ENCODE measurements at regions of chr6 and their contacts with region 1.

Region 1: DNA sequence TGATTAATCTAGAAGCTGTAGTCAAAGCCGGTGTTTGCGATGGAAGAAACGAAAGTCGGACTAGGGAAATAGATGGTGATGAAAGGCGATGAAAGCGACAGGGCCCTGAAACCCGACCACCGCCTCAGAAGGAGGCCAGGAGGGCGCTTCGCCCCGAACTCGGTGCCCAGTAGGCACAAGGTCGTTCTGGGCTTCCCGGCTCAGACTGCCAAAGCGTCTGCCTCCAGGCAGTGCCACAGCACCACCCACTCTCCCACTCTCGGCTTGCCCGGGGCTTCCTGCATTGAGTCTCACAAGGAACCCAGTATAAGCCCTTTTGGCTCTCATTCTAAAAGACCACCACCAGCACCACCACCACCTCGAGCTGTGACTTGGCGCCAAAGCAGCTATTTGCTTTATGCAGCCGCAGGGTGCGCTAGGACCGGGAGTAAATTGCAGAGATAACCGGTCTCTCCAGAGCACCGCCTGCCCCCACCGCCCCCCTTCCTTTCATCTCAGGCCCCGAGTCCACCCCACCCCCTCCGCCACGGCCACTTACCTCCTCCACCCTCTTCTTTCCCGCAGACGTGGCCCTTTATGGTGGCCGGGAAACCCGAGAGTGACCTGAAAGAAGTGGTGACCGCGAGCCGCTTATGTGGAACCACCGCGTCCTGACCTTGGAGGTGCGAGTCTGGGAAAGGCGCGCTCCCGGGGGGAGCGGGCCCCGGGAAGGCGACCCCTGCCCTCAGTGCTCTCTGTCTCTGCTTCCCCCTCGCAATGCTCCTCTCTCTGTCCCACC is 2.4 kb downstream of the TCF21 start:
- DNase-seq: peak; percentile 12
- H3K4me3 Mint-ChIP-seq: peak overlapping the region; percentile 68
- H3K27ac Mint-ChIP-seq: no peak overlapping the region
- H3K4me1 Mint-ChIP-seq: peaks cover 43% of the 10 kb centered on the region
- H3K27me3 Mint-ChIP-seq: peaks cover 87% of the 10 kb centered on the region

Region 2: GRCh38 chr6:133241086-133241900 is 650.0 kb before region 1 on chr6 and contains the start of gene EYA4:
- CTCF ChIA-PET with region 1: no interaction called
- intact Hi-C with region 1: loop called (anchors 5 kb)
- DNase-seq: no peak
- H3K4me3 Mint-ChIP-seq: peak within 1 kb of the TSS; percentile 36
- H3K27ac Mint-ChIP-seq: no peak within 1 kb of the TSS
- H3K4me1 Mint-ChIP-seq: peaks cover 20% of the 10 kb centered on the region
- H3K27me3 Mint-ChIP-seq: peaks cover 41% of the 10 kb centered on the region
- total RNA-seq, gene EYA4: not detected

Region 3: DNA sequence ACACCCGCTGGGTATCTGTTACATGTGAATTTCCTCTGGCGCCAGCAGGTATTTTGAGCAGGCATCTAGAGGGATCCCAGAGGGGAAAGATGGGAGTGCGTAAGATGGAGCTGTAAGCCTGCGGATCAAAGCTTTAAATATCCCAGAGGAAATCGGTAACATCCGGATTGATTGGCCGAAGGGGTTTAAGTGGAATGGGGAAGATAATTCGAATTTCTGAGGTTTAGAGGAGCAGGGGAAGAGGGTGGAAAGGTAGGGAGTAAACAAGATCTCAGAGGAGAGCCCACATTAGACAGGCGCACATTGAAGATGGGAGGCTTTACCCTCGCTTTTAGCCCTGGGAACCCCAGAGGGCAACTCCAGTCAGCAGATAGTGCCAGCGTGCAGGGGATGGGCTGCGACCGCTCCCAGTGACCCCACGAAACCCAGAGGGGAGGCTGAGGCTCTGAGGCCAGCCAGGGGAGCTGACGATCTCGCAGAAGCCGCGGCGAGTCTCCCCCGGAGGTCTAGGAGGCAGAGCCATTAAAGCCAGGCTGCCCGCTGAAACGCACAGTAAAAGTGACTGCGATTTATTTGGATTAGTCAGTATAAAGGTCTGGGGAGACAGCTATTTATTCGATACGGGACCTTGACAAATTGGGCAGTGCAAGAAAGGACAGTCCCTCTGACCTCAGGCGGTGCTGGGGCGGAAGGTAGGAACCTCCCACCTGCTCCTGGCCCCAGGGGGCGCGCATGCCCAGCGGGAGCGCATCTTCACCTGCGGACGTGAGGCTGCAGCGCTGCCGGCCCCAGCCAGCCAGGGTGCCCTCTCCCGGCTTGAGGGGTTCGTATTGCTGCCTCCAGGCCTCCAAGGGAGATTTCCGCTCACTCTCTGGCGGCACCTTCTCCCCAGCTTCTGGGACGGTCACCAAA is 36.7 kb before region 1 on chr6:
- CTCF ChIA-PET with region 1: no interaction called
- intact Hi-C with region 1: loop called (anchors 2 kb)
- DNase-seq: no peak
- H3K4me3 Mint-ChIP-seq: no peak overlapping the region
- H3K27ac Mint-ChIP-seq: no peak overlapping the region
- H3K4me1 Mint-ChIP-seq: peaks cover 10% of the 10 kb centered on the region
- H3K27me3 Mint-ChIP-seq: peaks cover 52% of the 10 kb centered on the region

Region 4: DNA sequence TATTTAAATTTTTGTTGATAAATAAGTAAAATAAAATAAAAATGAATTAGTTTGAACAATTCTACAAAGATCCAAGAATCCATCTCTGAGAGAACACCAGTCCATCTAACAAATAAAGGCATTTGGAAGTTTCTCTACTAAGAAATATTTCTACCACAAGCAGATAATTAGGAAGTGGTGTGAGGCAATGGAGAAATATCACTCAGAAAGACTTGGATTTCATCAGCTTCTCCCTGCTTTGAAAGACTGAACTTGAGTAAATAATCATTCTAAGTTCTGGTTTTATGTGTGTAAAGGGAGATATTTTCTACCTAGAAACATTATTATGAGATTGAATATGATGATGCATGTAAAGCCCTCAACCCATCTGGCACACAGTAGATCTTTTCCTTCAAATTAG is 20.2 kb before region 1 on chr6:
- CTCF ChIA-PET with region 1: no interaction called
- intact Hi-C with region 1: no loop called
- DNase-seq: no peak
- H3K4me3 Mint-ChIP-seq: no peak overlapping the region
- H3K27ac Mint-ChIP-seq: no peak overlapping the region
- H3K4me1 Mint-ChIP-seq: no peaks in the 10 kb centered on the region
- H3K27me3 Mint-ChIP-seq: peaks cover 14% of the 10 kb centered on the region

Measured in activated naive CD4-positive, alpha-beta T cell treated with anti-CD3 and anti-CD28 coated beads for 36 hours (primary cell).